Breast epithelium (tissue), 4 donors: ENCODE measurements at regions of chr1 and their contacts with region 1.

Region 1: GRCh38 chr1:201361652-201362504 is 15.6 kb downstream of the TNNT2 start:
- DNase-seq: no peak
- H3K4me3 ChIP-seq: no peak overlapping the region
- H3K27ac ChIP-seq: no peak overlapping the region
- H3K4me1 ChIP-seq: no peaks in the 10 kb centered on the region
- H3K27me3 ChIP-seq: no peaks in the 10 kb centered on the region
- CTCF ChIP-seq: peak; percentile 82 to 94 (median 85)
- POLR2A ChIP-seq: no peak

Region 2: GRCh38 chr1:201096035-201096434 is 265.8 kb before region 1 on chr1:
- intact Hi-C with region 1: no loop called
- DNase-seq: no peak
- H3K4me3 ChIP-seq: no peak overlapping the region
- H3K27ac ChIP-seq: no peak overlapping the region
- H3K4me1 ChIP-seq: no peaks in the 10 kb centered on the region
- H3K27me3 ChIP-seq: no peaks in the 10 kb centered on the region
- CTCF ChIP-seq: no peak
- POLR2A ChIP-seq: no peak

Region 3: DNA sequence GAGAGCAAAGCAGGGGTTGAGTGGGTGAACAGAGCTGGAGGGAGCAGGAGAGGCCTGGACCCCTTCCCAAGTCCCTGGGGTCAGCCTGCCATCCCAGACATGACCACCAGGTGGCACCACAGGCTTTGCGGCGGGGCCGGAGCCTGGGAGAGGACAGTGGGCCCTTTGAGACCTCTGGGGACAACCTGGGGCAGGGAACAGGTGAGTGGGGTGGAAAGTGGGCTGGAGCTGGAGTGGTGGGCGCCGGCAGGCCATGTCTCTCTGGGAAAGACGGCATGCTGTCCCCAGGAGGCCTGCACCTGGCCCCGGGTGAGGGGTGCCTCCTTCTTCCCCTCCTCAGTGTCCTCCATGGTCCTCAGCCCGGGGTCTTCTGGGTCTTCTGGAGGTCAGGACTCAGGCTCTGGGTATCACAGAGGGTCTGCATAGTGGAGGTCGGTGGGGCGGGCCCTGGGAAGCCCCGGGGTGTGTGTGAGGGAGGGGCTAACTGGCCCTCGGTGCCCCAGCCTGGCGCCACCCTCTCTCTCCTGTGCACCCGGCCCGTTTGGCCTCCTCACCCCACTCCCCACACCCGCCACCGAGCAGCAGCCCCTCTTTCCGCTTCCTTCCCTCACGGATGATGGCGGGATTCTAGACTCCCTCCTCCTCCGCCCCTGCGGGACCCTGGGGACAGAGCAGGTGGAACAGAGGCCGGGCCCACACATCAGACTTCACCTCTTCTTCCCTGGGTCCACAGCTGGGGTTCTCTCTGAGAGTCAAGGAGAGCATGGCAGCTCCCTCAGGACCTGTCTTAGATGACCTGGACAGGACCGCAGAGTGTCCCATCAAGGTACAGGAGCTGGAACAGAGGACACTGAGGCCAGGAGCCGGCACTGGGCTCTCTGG is 107.0 kb before region 1 on chr1:
- intact Hi-C with region 1: loop called (anchors 5 kb)
- DNase-seq: peak; percentile 41 to 72
- H3K4me3 ChIP-seq: no peak overlapping the region
- H3K27ac ChIP-seq: no peak overlapping the region
- H3K4me1 ChIP-seq: peaks cover 0 to 6% of the 10 kb centered on the region in 2 donors
- H3K27me3 ChIP-seq: no peaks in the 10 kb centered on the region
- CTCF ChIP-seq: peak; percentile 88 to 99 (median 97)
- POLR2A ChIP-seq: no peak